CD4-positive, alpha-beta T cell (primary cell): ENCODE measurements at regions of chr4 and their contacts with region 1.

Region 1: GRCh38 chr4:52712172-52712990 is 38.8 kb downstream of the ERVMER34-1 start:
- DNase-seq: peak; percentile 90 to 98 (median 94)
- ATAC-seq: peak; percentile 85
- H3K4me3 ChIP-seq: peak overlapping the region; percentile 84
- H3K4me3 Mint-ChIP-seq: peak overlapping the region; percentile 93
- H3K27ac ChIP-seq: peak overlapping the region; percentile 84 to 90
- H3K27ac Mint-ChIP-seq: peak overlapping the region; percentile 99
- H3K4me1 ChIP-seq: peaks cover 40% of the 10 kb centered on the region
- H3K4me1 Mint-ChIP-seq: peaks cover 40% of the 10 kb centered on the region
- H3K27me3 ChIP-seq: no peaks in the 10 kb centered on the region
- H3K27me3 Mint-ChIP-seq: no peaks in the 10 kb centered on the region
- CTCF ChIP-seq: no peak

Region 2: GRCh38 chr4:51842554-51843308 is 869.6 kb before region 1 on chr4 and contains the start of gene DCUN1D4:
- CTCF ChIA-PET with region 1: interaction called, 4 read pairs
- POLR2A ChIA-PET with region 1: interaction called, 19 read pairs
- intact Hi-C with region 1: no loop called
- DNase-seq: peak; percentile 92 to 99 (median 98)
- ATAC-seq: peak; percentile 82
- H3K4me3 ChIP-seq: peak within 1 kb of the TSS; percentile 75
- H3K4me3 Mint-ChIP-seq: peak within 1 kb of the TSS; percentile 100
- H3K27ac ChIP-seq: peak within 1 kb of the TSS; percentile 58 to 68
- H3K27ac Mint-ChIP-seq: peak within 1 kb of the TSS; percentile 90
- H3K4me1 ChIP-seq: peaks cover 19% of the 10 kb centered on the region
- H3K4me1 Mint-ChIP-seq: peaks cover 38% of the 10 kb centered on the region
- H3K27me3 ChIP-seq: no peaks in the 10 kb centered on the region
- H3K27me3 Mint-ChIP-seq: no peaks in the 10 kb centered on the region
- CTCF ChIP-seq: peak; percentile 26
- total RNA-seq, gene DCUN1D4: 36.2 to 39.9 TPM

Region 3: DNA sequence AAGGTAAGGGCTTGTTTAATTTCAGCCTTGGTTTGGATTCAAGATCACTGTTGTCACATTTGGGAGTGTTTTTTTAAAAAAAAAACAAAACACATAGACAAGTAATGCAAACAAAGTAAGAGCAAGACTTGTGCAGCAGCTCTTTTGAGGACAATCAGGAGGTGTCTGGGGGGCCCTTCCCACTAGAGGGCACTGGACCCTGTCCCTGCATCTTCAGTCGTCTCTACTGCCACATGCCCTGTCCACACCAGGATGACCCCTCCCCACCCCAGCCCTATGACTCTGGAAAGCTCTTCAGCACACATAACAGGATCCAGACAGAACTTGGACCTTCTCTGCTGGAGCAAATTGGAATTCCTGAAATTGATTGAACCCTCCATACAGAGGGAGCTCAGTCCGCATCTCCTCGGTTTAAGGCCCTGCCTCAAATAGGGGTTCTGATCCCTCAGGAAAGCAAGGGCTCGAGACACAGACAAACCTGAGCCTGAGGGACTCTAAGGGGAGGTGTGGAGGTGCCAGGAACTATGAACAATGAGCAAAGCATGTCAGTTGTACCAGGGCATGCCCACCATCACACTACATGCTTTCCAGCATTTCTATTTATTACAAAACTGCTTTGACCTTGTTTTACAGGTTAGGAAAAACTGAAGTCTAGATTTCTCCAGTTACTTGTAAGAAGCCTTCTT is 124.1 kb before region 1 on chr4:
- CTCF ChIA-PET with region 1: no interaction called
- POLR2A ChIA-PET with region 1: interaction called, 13 read pairs
- intact Hi-C with region 1: no loop called
- DNase-seq: peak in 5 of 14 experiments; percentile 2 to 38 (median 17)
- ATAC-seq: no peak
- H3K4me3 ChIP-seq: no peak overlapping the region
- H3K4me3 Mint-ChIP-seq: no peak overlapping the region
- H3K27ac ChIP-seq: peak overlapping the region in 1 of 2 donors; percentile 33
- H3K27ac Mint-ChIP-seq: peak overlapping the region; percentile 64
- H3K4me1 ChIP-seq: peaks cover 14% of the 10 kb centered on the region
- H3K4me1 Mint-ChIP-seq: peaks cover 31% of the 10 kb centered on the region
- H3K27me3 ChIP-seq: no peaks in the 10 kb centered on the region
- H3K27me3 Mint-ChIP-seq: no peaks in the 10 kb centered on the region
- CTCF ChIP-seq: peak; percentile 11

Region 4: GRCh38 chr4:52659001-52659721 is 53.2 kb before region 1 on chr4 and contains the start of gene USP46:
- CTCF ChIA-PET with region 1: no interaction called
- POLR2A ChIA-PET with region 1: interaction called, 37 read pairs
- intact Hi-C with region 1: loop called (anchors 2 to 10 kb)
- DNase-seq: peak in 13 of 14 experiments; percentile 2 to 73 (median 37)
- ATAC-seq: peak; percentile 70
- H3K4me3 ChIP-seq: peak within 1 kb of the TSS; percentile 74
- H3K4me3 Mint-ChIP-seq: peak within 1 kb of the TSS; percentile 94
- H3K27ac ChIP-seq: no peak within 1 kb of the TSS
- H3K27ac Mint-ChIP-seq: peak within 1 kb of the TSS; percentile 73
- H3K4me1 ChIP-seq: peaks cover 24% of the 10 kb centered on the region
- H3K4me1 Mint-ChIP-seq: peaks cover 38% of the 10 kb centered on the region
- H3K27me3 ChIP-seq: no peaks in the 10 kb centered on the region
- H3K27me3 Mint-ChIP-seq: peaks cover 25% of the 10 kb centered on the region
- CTCF ChIP-seq: no peak
- total RNA-seq, gene USP46: 6.8 to 10.5 TPM

Region 5: GRCh38 chr4:52728691-52729240 is 16.4 kb after region 1 on chr4:
- CTCF ChIA-PET with region 1: no interaction called
- POLR2A ChIA-PET with region 1: interaction called, 10 read pairs
- intact Hi-C with region 1: no loop called
- DNase-seq: no peak
- ATAC-seq: no peak
- H3K4me3 ChIP-seq: no peak overlapping the region
- H3K4me3 Mint-ChIP-seq: no peak overlapping the region
- H3K27ac ChIP-seq: no peak overlapping the region
- H3K27ac Mint-ChIP-seq: no peak overlapping the region
- H3K4me1 ChIP-seq: no peaks in the 10 kb centered on the region
- H3K4me1 Mint-ChIP-seq: no peaks in the 10 kb centered on the region
- H3K27me3 ChIP-seq: no peaks in the 10 kb centered on the region
- H3K27me3 Mint-ChIP-seq: no peaks in the 10 kb centered on the region
- CTCF ChIP-seq: no peak

Region 6: DNA sequence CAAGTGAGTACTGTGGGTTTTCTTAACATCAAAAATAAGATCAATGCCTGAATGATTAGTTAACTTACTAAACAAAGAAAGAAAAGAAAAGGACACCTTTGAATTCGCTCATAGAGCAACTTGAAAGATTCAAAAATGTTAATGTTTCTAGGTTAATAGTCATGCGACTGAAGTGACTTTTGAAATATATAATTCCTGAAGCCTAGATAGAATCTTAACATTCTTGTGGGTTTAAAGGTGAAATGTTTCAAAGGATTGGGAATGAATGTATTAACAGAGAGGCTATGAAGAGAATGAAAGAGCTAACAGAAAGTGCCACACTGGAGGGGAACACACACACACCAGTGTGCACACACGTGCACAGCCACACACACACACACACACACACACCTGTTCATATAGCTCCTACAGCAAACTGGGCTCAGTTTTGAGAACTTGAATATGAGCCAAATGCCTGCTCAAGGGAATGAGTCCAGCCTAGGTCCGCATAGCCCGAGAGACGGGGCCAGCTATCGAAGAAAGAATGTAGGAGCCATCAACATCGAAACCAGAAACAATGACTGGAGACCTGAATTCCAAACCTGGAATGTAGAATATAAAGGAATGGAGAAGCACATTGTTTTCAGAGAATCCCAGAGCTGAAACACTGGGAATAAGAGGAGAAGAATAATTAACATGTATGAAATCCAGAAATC is 76.3 kb after region 1 on chr4:
- CTCF ChIA-PET with region 1: no interaction called
- POLR2A ChIA-PET with region 1: no interaction called
- intact Hi-C with region 1: no loop called
- DNase-seq: no peak
- ATAC-seq: no peak
- H3K4me3 ChIP-seq: no peak overlapping the region
- H3K4me3 Mint-ChIP-seq: no peak overlapping the region
- H3K27ac ChIP-seq: no peak overlapping the region
- H3K27ac Mint-ChIP-seq: no peak overlapping the region
- H3K4me1 ChIP-seq: no peaks in the 10 kb centered on the region
- H3K4me1 Mint-ChIP-seq: no peaks in the 10 kb centered on the region
- H3K27me3 ChIP-seq: no peaks in the 10 kb centered on the region
- H3K27me3 Mint-ChIP-seq: peaks cover 14% of the 10 kb centered on the region
- CTCF ChIP-seq: no peak

Region 7: DNA sequence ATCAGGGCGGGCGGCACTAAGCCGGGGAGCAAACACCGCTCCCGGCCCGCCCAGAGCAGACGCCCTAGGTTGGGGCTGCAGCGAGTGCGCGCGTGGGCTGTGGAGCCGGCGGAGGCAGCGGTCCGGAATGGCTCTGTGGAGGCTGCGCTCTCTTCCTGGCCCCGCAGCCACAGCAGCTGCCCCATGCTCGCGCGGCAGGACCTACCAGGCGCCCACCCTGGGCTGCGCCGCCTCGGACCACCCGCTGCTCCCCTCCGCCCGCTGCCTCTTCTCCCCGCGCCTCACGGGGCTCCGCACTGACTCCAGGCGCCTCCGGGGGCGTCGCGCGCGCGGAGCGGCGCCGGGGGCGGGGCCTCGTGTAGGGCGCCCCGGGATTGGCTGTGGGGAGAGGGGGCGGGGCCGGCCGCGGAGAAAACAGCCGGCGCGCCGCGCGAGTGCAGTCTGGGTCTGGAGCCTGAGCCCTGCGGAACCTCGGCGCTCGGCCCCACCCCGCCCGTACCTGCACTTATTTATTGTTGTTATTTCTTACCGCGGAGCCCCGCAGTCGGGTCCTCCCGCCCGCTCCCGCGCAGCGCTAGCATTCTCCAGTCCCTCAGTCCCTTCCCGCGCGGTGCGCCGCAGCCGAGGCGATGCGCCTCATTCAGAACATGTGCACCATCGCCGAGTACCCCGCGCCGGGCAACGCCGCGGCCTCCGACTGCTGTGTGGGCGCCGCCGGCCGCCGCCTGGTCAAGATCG is 149.7 kb after region 1 on chr4 and contains the start of gene RASL11B:
- CTCF ChIA-PET with region 1: no interaction called
- POLR2A ChIA-PET with region 1: interaction called, 4 read pairs
- intact Hi-C with region 1: loop called (anchors 2 to 5 kb)
- DNase-seq: peak; percentile 65 to 93 (median 81)
- ATAC-seq: peak; percentile 98
- H3K4me3 ChIP-seq: peak within 1 kb of the TSS; percentile 58
- H3K4me3 Mint-ChIP-seq: peak within 1 kb of the TSS; percentile 83
- H3K27ac ChIP-seq: no peak within 1 kb of the TSS
- H3K27ac Mint-ChIP-seq: no peak within 1 kb of the TSS
- H3K4me1 ChIP-seq: peaks cover 18% of the 10 kb centered on the region
- H3K4me1 Mint-ChIP-seq: peaks cover 12% of the 10 kb centered on the region
- H3K27me3 ChIP-seq: peaks cover 19 to 20% of the 10 kb centered on the region in 2 experiments
- H3K27me3 Mint-ChIP-seq: peaks cover 46% of the 10 kb centered on the region
- CTCF ChIP-seq: peak; percentile 33
- total RNA-seq, gene RASL11B: 0.31 to 0.63 TPM

Region 8: GRCh38 chr4:53365486-53366300 is 653.3 kb after region 1 on chr4 and contains the start of gene SCFD2:
- CTCF ChIA-PET with region 1: no interaction called
- POLR2A ChIA-PET with region 1: interaction called, 8 read pairs
- intact Hi-C with region 1: loop called in 1 of 2 experiments (anchors 5 kb)
- DNase-seq: peak; percentile 87 to 98 (median 95)
- ATAC-seq: peak; percentile 95
- H3K4me3 ChIP-seq: peak within 1 kb of the TSS; percentile 72
- H3K4me3 Mint-ChIP-seq: peak within 1 kb of the TSS; percentile 91
- H3K27ac ChIP-seq: peak within 1 kb of the TSS; percentile 75 to 77
- H3K27ac Mint-ChIP-seq: peak within 1 kb of the TSS; percentile 93
- H3K4me1 ChIP-seq: peaks cover 30% of the 10 kb centered on the region
- H3K4me1 Mint-ChIP-seq: peaks cover 55% of the 10 kb centered on the region
- H3K27me3 ChIP-seq: peaks cover 0 to 6% of the 10 kb centered on the region in 2 experiments
- H3K27me3 Mint-ChIP-seq: peaks cover 11% of the 10 kb centered on the region
- CTCF ChIP-seq: no peak
- total RNA-seq, gene SCFD2: 15.4 to 17.6 TPM